ENCODE measurements at regions of chr17 and their contacts with region 1.

Region 1: GRCh38 chr17:58631523-58632323 is 60.1 kb downstream of the TEX14 start:
- DNase-seq: peak; percentile 87
- CTCF ChIP-seq: no peak

Region 2: GRCh38 chr17:58504826-58505521 is 126.7 kb before region 1 on chr17:
- CTCF ChIA-PET with region 1: no interaction called
- POLR2A ChIA-PET with region 1: interaction called, 12 read pairs
- DNase-seq: peak; percentile 85
- CTCF ChIP-seq: no peak

Region 3: DNA sequence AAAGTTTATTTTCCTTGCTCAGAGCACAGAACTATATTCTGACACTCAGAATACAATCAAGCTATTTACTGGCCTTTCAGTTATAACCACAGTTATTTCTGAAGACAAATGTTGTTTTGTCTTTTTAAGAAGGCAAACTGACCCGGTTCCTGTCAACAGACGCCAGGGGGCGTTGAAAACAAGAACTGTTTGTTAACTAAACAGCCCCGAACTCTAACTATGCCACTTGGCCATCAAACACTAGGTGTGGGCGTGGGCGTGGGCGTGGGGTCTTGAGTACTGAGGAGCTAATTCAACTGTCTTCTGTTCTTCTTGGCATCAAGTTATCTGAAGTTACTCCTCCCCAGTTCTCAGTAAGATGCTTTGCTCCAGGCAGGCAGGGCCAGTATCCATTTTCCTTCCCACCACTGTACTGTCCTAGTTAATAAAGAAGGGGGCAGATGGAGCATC is 54.1 kb before region 1 on chr17:
- CTCF ChIA-PET with region 1: interaction called, 4 read pairs
- POLR2A ChIA-PET with region 1: interaction called, 22 read pairs
- DNase-seq: peak; percentile 65
- CTCF ChIP-seq: peak; percentile 61

Region 4: DNA sequence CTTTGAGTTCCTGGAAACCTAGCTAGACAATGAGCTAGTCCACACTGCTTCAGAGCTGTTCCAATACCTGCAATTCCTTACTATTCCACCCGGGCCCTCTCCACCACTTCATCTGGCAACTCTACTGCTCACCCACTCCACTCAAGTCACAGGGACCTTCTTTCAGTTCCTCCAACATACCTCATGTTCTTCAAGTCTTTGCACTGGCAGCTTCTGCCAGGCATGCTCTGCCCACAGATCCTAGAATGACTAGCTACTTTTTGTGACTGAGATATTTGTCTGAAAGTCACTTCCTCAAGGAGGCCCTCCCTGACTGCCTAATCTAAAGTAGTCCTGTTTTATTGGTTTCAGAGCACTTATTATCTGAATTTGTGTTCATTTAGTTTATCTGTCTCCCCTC is 26.3 kb before region 1 on chr17:
- CTCF ChIA-PET with region 1: no interaction called
- POLR2A ChIA-PET with region 1: interaction called, 146 read pairs
- DNase-seq: no peak
- CTCF ChIP-seq: no peak

Region 5: GRCh38 chr17:58643140-58643539 is 11.4 kb after region 1 on chr17:
- CTCF ChIA-PET with region 1: interaction called, 6 read pairs
- POLR2A ChIA-PET with region 1: interaction called, 24 read pairs
- DNase-seq: no peak
- CTCF ChIP-seq: no peak

Region 6: DNA sequence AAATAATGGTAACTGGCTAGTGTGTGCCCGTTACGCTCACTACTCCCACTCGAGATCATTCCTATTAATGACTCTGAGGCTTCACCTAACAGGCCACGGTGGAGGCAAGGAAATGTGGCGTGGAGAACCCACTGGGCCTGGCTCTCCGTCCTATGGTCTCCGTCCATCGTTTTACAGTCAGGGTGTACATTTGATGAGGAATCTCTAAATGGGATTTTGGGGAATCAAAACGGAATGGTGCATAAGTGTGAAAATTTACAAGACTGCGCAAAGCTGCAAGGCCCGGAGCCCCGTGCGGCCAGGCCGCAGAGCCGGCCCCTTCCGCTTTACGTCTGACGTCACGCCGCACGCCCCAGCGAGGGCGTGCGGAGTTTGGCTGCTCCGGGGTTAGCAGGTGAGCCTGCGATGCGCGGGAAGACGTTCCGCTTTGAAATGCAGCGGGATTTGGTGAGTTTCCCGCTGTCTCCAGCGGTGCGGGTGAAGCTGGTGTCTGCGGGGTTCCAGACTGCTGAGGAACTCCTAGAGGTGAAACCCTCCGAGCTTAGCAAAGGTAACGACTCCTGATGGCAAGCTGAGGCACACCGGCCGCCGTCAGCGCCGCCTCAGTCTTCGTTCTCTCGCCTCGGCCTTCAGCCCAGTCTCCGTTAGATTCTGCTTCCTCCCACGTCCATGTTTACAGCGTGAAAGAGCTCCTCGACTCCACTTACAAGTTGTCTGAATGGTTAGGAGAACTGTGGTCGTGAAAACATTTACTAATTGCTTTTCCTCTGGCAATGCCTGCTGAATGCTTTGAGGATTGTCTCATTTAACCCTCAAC is 60.7 kb after region 1 on chr17 and contains the start of gene RAD51C:
- CTCF ChIA-PET with region 1: no interaction called
- POLR2A ChIA-PET with region 1: interaction called, 19 read pairs
- DNase-seq: peak; percentile 91
- CTCF ChIP-seq: no peak

Region 7: GRCh38 chr17:58747674-58748073 is 116.0 kb after region 1 on chr17:
- CTCF ChIA-PET with region 1: no interaction called
- POLR2A ChIA-PET with region 1: no interaction called
- DNase-seq: no peak
- CTCF ChIP-seq: no peak

Region 8: GRCh38 chr17:58777396-58777795 is 145.7 kb after region 1 on chr17:
- CTCF ChIA-PET with region 1: no interaction called
- POLR2A ChIA-PET with region 1: no interaction called
- DNase-seq: no peak
- CTCF ChIP-seq: no peak

Measured in GM10248 (cell line).